BJ (cell line): ENCODE measurements at regions of chr20 and their contacts with region 1.

Region 1: DNA sequence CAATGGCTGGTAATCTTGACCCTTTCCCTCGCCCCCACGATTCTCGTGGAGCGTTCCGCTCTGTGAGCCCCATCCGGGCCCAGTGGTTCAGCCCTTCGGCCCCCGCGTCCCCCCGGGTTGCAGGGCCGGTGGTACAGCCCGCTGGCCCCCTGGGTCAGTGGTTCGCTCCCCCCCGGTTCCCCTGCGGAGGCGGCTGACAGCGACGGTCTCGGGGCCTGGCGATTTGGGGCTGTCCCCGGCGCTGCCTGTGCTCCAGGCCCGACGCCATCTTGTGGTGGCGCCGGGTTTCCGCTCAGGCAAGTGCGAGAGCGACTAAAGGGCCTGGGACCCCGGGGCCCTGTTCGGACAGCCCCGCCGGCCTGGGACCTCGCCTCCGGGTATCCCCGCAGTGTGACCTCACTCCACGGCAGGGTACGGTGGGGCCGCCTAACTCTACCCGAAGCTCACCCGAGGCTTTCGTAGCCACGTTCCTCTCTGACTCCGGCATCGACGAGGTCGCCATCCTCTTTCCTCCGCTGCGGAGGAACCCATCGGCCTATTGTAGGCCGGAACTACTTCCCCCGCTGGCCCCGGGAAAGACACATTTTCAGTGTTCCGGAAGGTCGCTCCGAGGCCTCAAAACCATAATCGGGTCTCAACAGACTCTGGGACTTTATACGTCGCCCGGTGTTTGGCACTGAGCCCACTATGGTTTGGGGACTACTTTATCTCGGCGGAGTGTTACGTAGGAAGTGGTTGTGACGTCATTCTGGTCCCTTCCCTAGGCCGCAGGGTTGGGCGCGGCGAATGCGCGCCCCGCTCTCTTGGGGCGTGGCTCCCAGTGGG is at the start of gene ZNF335:
- DNase-seq: peak; percentile 60
- H3K4me3 ChIP-seq: peak within 1 kb of the TSS; percentile 90
- H3K27me3 ChIP-seq: no peaks in the 10 kb centered on the region
- CTCF ChIP-seq: peak; percentile 39
- polyA plus RNA-seq, gene ZNF335: 4.5 and 9.9 TPM in 2 replicates

Region 2: GRCh38 chr20:45211569-45212474 is 760.1 kb before region 1 on chr20:
- CTCF ChIA-PET with region 1: no interaction called
- POLR2A ChIA-PET with region 1: no interaction called
- DNase-seq: no peak
- H3K4me3 ChIP-seq: no peak overlapping the region
- H3K27me3 ChIP-seq: peaks cover 1% of the 10 kb centered on the region; the same call in 1 of the 2 replicates
- CTCF ChIP-seq: no peak

Region 3: GRCh38 chr20:45798935-45799642 is 172.8 kb before region 1 on chr20:
- CTCF ChIA-PET with region 1: interaction called, 21 read pairs
- POLR2A ChIA-PET with region 1: no interaction called
- DNase-seq: no peak
- H3K4me3 ChIP-seq: no peak overlapping the region
- H3K27me3 ChIP-seq: no peaks in the 10 kb centered on the region
- CTCF ChIP-seq: peak; percentile 78

Region 4: DNA sequence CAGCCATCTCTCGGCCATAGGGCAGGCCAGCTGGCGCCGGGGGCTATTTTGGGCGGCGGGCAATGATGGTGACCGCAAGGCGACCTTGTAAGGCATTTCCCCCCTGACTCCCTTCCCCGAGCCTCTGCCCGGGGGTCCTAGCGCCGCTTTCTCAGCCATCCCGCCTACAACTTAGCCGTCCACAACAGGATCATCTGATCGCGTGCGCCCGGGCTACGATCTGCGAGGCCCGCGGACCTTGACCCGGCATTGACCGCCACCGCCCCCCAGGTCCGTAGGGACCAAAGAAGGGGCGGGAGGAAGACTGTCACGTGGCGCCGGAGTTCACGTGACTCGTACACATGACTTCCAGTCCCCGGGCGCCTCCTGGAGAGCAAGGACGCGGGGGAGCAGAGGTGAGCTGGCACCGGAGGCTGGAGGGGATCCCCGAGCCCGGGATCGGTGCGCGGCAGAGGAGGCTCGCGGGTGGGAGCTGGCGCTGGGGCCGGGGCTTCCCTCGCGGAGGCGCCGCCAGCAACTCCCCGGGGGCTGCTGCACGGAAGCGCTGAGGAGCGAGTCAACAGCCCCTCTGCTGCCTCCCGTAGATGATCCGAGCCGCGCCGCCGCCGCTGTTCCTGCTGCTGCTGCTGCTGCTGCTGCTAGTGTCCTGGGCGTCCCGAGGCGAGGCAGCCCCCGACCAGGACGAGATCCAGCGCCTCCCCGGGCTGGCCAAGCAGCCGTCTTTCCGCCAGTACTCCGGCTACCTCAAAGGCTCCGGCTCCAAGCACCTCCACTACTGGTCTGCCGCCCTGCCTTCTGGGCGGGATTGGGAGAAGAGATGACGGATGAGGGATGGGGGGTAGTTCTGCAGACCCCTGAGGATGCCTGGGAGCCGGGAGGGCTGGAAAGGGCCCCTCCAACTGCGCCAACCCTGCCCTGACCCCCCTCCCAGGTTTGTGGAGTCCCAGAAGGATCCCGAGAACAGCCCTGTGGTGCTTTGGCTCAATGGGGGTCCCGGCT is 80.6 kb before region 1 on chr20 and contains the starts of genes CTSA and NEURL2:
- CTCF ChIA-PET with region 1: interaction called, 15 read pairs
- POLR2A ChIA-PET with region 1: no interaction called
- DNase-seq: no peak
- H3K4me3 ChIP-seq: peak within 1 kb of the TSS; percentile 77
- H3K27me3 ChIP-seq: no peaks in the 10 kb centered on the region
- CTCF ChIP-seq: 0 out of 2 replicates have a peak, but pooled peaks have one; percentile 1
- polyA plus RNA-seq, gene CTSA: 286 and 408 TPM in 2 replicates
- polyA plus RNA-seq, gene NEURL2: 2.1 and 4.3 TPM in 2 replicates

Region 5: DNA sequence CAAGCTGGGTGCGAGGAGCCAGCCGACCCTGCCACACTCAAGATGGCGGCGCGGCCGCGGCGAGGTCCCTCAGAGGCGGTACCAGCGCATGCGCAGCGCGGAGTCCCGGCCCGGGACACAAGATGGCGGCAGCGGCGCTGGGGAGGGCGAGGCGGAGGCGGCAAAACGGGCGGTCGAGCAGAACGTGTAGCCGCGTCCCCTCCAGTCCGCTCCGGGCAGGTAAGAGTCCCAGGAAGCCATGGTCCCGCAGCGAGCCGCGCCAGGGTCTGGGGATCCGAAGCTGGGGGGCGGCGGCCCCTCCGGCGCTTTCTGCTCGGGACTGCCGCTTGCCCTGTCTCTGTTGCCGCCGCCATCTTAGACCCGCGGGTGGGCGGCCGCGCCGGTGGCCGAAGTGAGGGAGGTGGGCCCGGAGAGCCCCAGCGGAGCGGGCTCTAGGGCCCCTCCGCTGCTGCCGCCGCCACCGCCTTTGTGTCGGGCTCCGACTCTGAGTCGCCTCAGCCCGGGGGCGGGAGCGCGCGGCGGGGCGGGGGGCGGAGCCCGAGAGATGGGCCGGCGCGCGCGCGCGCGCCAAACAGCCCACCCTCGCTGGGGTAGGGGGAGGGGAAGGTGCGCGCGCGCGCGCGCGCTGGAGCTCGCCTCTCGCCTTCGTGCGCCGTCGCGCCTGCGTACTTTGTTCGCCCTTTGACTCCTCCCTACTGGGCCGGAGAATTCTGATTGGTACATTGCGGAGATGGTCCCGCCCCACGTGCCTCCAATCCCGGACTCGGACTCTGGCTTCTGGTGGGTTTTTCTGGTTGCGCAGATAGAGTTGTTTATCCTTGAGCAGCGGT is 37.1 kb before region 1 on chr20 and contains the start of gene PCIF1:
- CTCF ChIA-PET with region 1: interaction called, 18 read pairs
- POLR2A ChIA-PET with region 1: no interaction called
- DNase-seq: peak; percentile 85
- H3K4me3 ChIP-seq: peak within 1 kb of the TSS; percentile 63
- H3K27me3 ChIP-seq: no peaks in the 10 kb centered on the region
- CTCF ChIP-seq: no peak
- polyA plus RNA-seq, gene PCIF1: 12.7 and 20.9 TPM in 2 replicates

Region 6: GRCh38 chr20:45948742-45949541 is 22.9 kb before region 1 on chr20:
- CTCF ChIA-PET with region 1: interaction called, 28 read pairs
- POLR2A ChIA-PET with region 1: no interaction called
- DNase-seq: no peak
- H3K4me3 ChIP-seq: no peak overlapping the region
- H3K27me3 ChIP-seq: no peaks in the 10 kb centered on the region
- CTCF ChIP-seq: no peak

Region 7: GRCh38 chr20:45987108-45987780 is 15.4 kb after region 1 on chr20:
- CTCF ChIA-PET with region 1: interaction called, 64 read pairs
- POLR2A ChIA-PET with region 1: no interaction called
- DNase-seq: no peak
- H3K4me3 ChIP-seq: no peak overlapping the region
- H3K27me3 ChIP-seq: peaks cover 2% of the 10 kb centered on the region
- CTCF ChIP-seq: peak; percentile 89

Region 8: DNA sequence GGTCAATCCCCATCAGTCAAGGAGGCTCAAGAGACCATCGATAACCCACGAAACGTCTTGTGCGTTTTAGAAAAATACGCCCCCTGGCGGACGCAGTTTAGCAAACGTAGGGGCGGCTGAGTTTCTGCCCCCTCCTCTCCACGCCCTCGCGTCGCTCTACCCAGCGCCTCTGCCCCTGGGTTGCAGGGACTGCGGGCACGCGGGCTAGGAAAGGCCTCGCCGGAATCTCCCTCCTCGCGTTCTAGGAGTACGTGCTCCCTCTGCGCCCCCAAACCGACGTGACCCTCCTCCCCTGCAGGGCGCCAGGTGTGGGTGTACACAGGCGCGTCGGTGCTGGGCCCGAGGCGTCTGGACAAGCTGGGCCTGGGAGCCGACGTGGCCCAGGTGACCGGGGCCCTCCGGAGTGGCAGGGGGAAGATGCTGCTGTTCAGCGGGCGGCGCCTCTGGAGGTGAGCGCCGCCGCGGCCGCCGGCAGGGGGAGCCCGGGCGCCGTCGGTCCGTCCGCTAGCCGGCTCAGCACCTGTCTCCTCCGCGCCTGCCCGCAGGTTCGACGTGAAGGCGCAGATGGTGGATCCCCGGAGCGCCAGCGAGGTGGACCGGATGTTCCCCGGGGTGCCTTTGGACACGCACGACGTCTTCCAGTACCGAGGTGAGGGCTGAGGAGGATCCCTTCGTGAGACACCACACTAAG is 42.1 kb after region 1 on chr20:
- CTCF ChIA-PET with region 1: interaction called, 17 read pairs
- POLR2A ChIA-PET with region 1: no interaction called
- DNase-seq: no peak
- H3K4me3 ChIP-seq: no peak overlapping the region
- H3K27me3 ChIP-seq: peaks cover 47% of the 10 kb centered on the region
- CTCF ChIP-seq: peak; percentile 71

Region 9: DNA sequence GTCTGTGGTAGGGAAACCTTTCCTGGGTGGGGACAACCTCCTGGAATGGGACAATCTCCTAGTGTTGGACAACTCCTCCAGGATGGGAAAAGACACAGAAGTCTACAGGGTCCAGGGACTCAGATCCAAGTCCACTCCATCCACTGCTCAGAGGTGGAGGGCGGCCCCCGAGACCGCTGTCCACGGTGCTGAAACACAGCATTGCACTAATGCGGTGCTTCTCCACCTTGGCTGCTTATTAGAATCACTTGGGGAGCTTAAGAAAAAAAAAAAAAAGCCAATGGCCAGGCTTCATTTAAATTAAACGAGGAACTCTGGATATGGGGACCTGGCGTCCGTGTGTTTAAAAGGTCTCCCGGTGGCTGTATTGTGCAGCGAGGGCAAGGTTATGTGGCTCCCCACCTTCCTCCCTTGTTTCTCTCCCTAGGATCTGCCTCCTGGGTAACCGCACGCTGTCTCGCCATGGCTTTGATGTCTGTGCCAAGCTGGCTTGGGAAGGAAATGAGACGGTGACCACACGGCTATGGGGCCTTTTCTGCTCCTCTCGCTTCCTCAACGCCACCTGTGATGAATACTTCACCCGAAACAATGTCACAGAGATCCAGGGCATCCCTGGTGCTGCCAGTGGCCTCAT is 69.1 kb after region 1 on chr20:
- CTCF ChIA-PET with region 1: no interaction called
- POLR2A ChIA-PET with region 1: no interaction called
- DNase-seq: no peak
- H3K4me3 ChIP-seq: no peak overlapping the region
- H3K27me3 ChIP-seq: no peaks in the 10 kb centered on the region; the same call in 1 of the 2 replicates
- CTCF ChIP-seq: no peak